Common myeloid progenitor, CD34-positive (primary cell): ENCODE measurements at regions of chr20 and their contacts with region 1.

Region 1: DNA sequence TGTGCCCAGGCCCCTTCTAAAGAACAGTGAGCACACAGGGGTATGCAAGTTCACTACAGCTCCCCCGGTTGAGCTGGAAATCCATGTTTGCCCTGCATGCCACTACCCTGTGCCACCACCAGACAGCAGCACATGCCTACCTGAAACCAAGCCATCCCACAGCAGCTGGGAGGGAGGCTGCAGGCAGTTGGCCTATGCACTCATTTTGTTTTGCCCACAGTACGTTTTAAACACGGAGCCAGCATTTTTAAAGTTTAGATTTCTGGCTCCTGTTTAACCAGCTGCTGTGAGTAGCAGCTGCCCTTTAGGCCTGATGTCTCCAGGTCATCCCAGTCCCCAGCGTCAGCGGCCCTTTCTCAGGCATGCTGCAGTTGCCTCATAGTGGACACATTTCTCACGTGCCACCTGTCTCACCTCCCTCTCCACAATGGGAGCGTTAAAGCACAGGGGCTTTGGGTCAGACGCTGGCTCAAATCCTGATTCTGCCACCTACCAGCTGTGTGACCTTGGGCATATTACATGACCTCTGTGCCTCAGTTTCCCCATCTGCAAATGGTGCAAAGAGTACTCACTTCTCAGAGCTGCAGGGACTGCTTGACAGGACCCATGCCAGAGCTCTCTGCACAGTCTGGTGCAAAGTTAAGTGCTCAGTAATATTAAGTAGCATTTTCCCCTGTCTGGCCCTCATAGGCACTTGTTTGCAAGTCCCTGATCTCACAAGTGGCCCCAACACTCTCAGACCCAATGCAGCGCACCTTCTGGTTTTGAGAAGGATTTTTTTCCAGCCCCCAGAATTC is 8.1 kb upstream of the UBE2V1 start:
- DNase-seq: peak; percentile 78 to 90 (median 88)
- H3K4me3 ChIP-seq: no peak overlapping the region
- H3K27ac ChIP-seq: no peak overlapping the region
- H3K4me1 ChIP-seq: peaks cover under 1 to 14% (median 9%) of the 10 kb centered on the region in 4 experiments
- H3K27me3 ChIP-seq: no peaks in the 10 kb centered on the region

Region 2: DNA sequence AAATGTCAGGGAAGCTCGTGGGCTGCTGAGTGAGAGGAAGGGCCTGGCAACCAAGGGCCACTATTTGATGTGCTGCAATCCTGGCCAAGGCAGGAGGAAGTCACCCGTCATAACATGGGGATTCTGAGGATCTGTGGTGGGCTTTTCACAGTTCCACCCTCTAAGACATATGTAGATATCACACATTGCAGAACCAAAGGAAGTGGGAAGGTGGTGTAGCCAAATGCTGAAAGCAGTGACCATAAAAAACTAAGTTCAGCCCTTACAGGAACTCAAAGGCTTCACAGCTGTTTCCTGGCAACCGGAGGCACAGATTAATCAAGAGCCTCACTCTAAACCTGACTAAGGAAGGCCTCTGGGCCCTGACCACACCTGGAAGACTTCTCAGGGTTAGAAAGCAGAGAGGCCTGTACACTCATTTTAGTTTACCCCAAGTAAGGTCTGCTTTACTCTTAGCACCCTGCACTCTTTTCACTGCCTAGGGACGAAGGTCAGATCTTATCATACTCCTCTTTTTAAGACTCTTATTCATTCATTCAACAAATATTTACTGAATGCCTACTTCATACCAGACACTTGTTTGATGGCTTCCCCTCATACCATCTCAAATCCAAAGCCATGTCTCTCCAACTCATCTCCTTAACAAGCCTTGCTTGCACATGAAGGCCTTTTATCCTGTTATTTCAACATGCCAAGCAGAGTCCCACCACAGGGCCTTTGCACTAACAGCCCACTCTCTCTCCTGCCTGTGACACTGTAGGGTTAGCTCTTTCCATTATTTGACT is 10.8 kb before region 1 on chr20:
- CTCF ChIA-PET with region 1: interaction called, 49 read pairs
- POLR2A ChIA-PET with region 1: interaction called, 4 read pairs
- DNase-seq: peak; percentile 93 to 100 (median 99)
- H3K4me3 ChIP-seq: peak overlapping the region in 4 of 7 experiments; percentile 3 to 91 (median 72)
- H3K27ac ChIP-seq: peak overlapping the region; percentile 33 to 59
- H3K4me1 ChIP-seq: peaks cover 52 to 78% (median 71%) of the 10 kb centered on the region in 4 experiments
- H3K27me3 ChIP-seq: no peaks in the 10 kb centered on the region

Region 3: GRCh38 chr20:50138479-50139393 is 17.6 kb after region 1 on chr20:
- CTCF ChIA-PET with region 1: interaction called, 21 read pairs
- POLR2A ChIA-PET with region 1: interaction called, 4 read pairs
- DNase-seq: no peak
- H3K4me3 ChIP-seq: no peak overlapping the region
- H3K27ac ChIP-seq: no peak overlapping the region
- H3K4me1 ChIP-seq: peaks cover 0 to 2% (median 0%) of the 10 kb centered on the region in 4 experiments
- H3K27me3 ChIP-seq: no peaks in the 10 kb centered on the region

Region 4: DNA sequence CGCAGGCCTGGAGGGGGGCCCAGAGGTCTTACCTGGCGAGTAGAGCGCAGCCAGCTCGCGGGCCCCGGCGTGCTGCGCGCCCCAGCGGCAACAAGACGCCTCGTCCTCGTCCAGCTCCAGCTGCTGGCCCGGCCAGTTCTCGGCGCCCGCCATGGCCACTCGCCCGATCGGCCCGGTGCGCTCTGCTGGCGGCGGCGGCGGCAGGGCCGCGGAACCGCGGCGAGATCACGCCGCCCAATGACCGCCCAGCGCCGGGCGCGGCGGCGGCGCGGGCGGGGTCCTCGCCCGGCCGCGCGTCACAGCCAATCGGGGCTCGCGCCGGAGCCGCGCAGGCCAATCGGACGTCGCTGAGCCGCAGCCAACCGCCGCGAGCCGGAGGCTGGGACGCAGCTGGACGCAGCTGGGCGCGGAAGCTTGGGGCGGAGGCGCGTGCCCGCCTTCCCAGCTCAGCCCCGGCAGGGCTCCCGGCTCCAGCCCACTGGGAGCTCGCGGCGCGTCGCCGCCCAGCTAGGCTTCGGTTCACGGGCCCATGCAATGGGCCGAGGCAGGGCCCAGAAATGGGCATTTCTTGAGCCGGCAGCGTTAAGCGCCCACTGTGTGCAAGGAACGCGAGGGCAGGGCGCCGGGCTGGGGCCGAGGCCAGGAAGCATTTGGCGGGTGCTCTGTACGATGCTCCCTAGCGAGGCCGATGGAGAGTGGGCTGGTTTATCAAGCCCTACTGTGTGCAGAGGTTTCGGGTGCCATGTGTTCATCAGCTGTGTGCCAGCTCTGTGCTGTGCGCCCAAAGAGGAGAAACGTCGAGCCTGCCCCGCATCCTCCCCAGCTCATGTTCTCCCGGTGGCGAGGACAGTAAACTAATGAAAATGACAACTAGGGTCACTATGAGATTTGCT is 32.6 kb after region 1 on chr20 and contains the start of gene PEDS1:
- CTCF ChIA-PET with region 1: interaction called, 41 read pairs
- POLR2A ChIA-PET with region 1: interaction called, 5 read pairs
- DNase-seq: peak; percentile 80 to 89 (median 87)
- H3K4me3 ChIP-seq: peak within 1 kb of the TSS; percentile 67 to 94 (median 81)
- H3K27ac ChIP-seq: peak within 1 kb of the TSS; percentile 46 to 86
- H3K4me1 ChIP-seq: peaks cover 3 to 31% (median 27%) of the 10 kb centered on the region in 4 experiments
- H3K27me3 ChIP-seq: no peaks in the 10 kb centered on the region

Region 5: DNA sequence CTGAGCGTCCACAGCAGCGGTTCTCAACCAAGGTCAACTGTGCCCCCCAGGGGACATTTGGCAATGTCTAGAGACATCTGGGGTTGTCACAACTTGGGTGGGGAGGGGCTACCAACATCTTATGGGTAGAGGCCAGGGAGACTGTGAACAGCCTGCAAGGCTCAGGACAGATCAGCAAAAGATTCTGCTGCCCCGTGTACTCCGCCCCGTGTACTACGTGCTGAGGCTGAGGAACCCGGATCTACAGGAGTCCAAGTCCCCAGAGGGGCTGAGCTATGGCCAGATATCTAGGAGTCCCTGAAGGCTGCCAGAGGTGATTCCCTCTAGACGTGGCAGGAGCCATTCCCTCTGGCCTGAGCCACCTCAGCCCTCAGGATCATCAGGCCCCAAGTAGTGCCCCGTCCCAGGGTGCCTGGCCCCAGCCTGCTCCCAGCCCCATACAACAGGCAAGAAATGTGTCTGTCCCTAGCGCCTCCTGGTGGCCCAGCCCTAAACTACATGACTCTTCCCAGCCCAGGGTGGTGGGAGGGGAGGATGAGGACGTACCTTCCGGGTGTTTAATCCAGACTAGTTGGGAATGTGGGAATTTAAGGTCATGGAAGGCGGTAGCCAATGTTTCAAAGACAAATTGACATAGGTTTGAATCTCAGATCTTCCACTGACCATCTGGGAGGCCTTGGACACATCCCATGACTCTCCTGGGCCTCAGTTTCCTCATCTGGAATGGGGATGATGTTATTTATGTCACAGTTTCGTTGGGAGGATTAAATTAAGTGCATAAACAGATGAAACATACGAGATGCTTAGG is 339.6 kb after region 1 on chr20:
- CTCF ChIA-PET with region 1: interaction called, 10 read pairs
- POLR2A ChIA-PET with region 1: no interaction called
- DNase-seq: peak; percentile 67 to 74 (median 69)
- H3K4me3 ChIP-seq: no peak overlapping the region
- H3K27ac ChIP-seq: no peak overlapping the region
- H3K4me1 ChIP-seq: peaks cover 4 to 36% (median 32%) of the 10 kb centered on the region in 4 experiments
- H3K27me3 ChIP-seq: no peaks in the 10 kb centered on the region